BJ (cell line): ENCODE measurements at regions of chr2 and their contacts with region 1.

Region 1: GRCh38 chr2:99489761-99490622 is at the start of gene REV1:
- DNase-seq: peak; percentile 56
- H3K4me3 ChIP-seq: peak within 1 kb of the TSS; percentile 76
- H3K27me3 ChIP-seq: no peaks in the 10 kb centered on the region
- CTCF ChIP-seq: peak; percentile 62
- polyA plus RNA-seq, gene REV1: 17.9 and 23.5 TPM in 2 replicates

Region 2: GRCh38 chr2:97654791-97655190 is 1835.2 kb before region 1 on chr2:
- CTCF ChIA-PET with region 1: no interaction called
- POLR2A ChIA-PET with region 1: no interaction called
- DNase-seq: no peak
- H3K4me3 ChIP-seq: no peak overlapping the region
- H3K27me3 ChIP-seq: no peaks in the 10 kb centered on the region
- CTCF ChIP-seq: no peak

Region 3: DNA sequence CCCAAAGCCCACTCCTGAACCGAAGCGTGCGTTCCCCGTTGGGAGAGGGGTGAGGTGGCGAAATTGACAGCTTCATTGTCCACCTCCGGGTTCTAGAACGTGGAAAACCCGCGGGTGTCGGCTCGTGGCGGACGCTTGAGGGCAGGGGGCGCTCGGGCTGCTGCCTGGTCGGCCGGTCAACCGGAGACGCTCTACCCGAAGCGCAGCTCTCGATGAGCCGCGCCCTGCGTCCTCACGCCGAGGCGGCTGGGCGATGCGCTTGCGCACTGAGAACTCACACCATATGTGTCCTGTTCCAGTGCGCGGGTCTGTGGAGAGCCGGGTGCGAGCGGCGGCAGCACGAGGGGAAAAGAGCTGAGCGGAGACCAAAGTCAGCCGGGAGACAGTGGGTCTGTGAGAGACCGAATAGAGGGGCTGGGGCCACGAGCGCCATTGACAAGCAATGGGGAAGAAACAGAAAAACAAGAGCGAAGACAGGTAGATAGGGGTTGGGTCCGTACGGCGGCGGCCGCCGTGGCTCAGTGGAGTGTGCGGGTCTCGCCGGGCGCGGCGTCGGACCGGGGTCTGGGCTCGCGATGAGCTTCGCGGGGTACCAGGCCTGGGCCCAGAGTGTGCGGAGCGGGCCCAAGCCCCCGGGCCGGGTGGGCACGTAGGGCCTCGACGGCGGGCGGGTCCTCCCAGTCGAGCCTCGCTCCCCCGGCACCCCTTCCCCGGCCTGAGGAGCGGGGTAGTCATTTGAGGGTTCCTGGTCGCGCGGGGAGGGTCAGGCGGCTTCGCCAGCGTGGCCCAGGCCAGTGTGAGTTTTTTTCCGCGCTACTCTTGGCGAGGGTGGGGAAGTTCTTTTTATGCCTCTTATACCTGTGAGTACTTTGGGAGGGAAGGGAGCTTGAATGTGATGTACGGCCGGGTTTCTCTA is 152.6 kb before region 1 on chr2 and contains the start of gene EIF5B:
- CTCF ChIA-PET with region 1: interaction called, 16 read pairs
- POLR2A ChIA-PET with region 1: interaction called, 3 read pairs
- DNase-seq: peak; percentile 80
- H3K4me3 ChIP-seq: peak within 1 kb of the TSS; percentile 97
- H3K27me3 ChIP-seq: no peaks in the 10 kb centered on the region
- CTCF ChIP-seq: peak; percentile 87
- polyA plus RNA-seq, gene EIF5B: 4.8 and 12.1 TPM in 2 replicates

Region 4: DNA sequence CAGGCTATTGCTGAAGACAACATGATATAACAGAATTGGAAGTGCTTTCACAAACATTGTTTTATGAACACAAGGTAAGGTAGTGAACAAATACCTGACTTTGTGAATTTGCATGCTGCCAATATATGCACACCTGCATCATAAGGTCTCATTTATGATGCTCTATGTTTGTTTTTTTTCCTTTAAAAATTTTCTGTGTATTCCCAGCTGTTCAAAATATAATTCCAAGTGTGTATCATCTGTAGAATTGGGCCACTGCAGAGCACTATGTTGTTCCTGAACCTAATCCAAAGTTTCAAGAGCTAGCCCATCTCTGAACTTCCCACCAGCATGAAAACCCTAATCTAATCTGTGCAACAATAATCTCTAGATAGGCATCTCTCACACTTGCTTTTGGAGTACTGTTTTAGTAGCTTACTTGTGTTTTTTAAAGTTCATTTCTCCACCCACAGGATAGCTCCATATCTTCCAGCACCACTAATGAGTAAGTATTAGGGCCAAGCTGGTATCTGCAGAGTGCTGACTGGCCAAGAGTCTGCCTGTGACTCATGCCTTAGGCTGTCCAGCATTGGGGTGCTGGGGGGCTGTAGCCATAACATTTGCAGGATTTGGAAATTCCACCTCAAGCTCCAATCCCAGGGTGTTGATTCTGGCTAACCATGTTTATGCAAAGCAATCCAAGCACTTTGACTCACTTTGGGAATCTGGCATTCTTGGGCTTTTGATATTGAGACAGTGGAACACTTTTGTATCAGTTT is 208.0 kb after region 1 on chr2:
- CTCF ChIA-PET with region 1: no interaction called
- POLR2A ChIA-PET with region 1: no interaction called
- DNase-seq: peak; percentile 70
- H3K4me3 ChIP-seq: no peak overlapping the region
- H3K27me3 ChIP-seq: no peaks in the 10 kb centered on the region
- CTCF ChIP-seq: no peak